ENCODE measurements at regions of chr9 and their contacts with region 1.

Region 1: DNA sequence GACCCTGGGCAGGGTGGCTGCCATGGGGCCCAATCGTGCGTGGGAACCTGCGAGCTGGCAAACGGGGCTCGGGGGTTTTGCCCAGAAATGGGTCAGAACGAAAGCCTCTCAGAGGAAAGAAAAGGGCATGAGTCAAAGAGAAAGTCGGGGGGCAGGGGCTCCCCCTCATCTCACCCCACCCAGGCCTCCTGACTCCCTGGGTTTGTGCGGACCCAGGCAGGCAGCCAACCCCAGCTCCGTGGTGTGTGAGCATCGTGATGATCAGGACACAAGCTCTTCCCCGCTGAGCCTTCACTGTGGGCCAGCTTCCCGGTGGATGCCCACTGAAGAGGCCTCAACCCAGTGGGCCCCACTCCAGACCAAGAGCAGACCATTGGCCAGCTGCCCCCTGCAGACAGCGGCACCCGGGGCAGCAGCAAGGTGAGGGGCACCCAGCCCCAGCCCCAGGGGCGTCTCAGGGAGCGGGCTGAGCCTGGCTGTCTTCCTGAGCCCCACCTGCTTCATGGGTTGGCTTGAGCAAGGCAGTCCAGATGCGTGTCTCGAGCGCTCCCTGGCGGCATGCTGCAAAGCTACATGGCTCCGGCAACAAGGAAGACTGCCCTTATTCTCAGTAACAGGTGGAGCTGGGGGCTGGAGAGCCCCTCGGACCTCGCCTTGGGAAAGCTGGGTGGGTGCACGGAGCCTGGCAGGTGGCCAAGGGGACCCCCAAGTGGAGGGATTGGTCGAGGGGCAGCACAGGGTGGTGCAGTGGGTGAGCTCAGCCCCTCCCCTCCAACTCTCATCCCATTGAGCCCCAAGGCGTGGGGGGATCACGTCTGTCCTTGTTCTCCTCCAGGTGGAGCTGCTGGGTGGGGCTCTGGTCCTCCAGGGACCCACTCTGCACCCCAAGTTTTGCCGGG is 3.2 kb upstream of the FUT7 start:
- DNase-seq: peak; percentile 90
- ATAC-seq: peak; percentile 94
- H3K4me3 Mint-ChIP-seq: no peak overlapping the region
- H3K27ac Mint-ChIP-seq: no peak overlapping the region
- H3K4me1 Mint-ChIP-seq: no peaks in the 10 kb centered on the region
- H3K27me3 Mint-ChIP-seq: no peaks in the 10 kb centered on the region
- CTCF ChIP-seq: peak; percentile 83

Region 2: GRCh38 chr9:136644598-136645351 is 390.3 kb before region 1 on chr9:
- CTCF ChIA-PET with region 1: no interaction called
- POLR2A ChIA-PET with region 1: no interaction called
- DNase-seq: peak; percentile 82
- ATAC-seq: peak; percentile 87
- H3K4me3 Mint-ChIP-seq: no peak overlapping the region
- H3K27ac Mint-ChIP-seq: no peak overlapping the region
- H3K4me1 Mint-ChIP-seq: no peaks in the 10 kb centered on the region
- H3K27me3 Mint-ChIP-seq: 0 out of 2 replicates have a peak, but pooled peaks cover 6% of the 10 kb centered on the region
- CTCF ChIP-seq: peak; percentile 81

Region 3: DNA sequence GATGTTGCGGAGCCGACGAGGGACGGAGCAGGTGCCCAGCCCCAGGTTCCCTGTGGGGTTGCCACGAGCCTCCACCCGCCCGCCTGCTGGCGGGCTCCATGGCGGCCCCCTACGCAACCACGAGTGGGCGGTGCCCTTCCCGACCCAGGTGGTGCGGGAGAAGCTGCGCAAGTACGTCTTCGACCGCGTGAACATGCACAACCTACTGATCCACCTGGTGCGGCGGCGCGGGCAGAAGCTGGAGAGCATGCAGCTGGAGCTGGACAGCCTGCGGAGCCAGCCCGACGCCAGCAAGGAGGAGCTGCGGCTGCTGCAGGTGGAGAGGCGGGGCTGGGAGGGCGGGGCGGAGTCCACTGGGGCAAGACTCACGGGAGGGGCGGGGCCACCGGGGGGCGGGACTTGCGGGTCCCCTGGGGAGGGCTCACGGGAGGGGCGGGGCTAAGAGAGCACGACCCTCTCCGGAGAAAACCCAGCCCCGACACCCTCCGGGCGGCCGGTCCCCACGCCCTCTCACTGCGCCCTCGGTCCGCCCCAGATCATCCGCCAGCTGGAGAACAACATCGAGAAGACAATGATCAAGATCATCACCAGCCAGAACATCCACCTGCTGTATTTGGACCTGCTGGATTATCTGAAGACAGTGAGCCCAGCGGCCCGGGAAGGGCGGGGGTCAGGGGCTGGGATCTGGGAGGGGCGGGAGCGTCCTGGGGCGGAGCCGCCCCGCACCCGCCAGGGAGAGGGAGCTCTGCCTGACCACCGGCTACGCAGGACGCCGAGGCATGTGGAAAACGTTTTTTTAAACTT is 235.1 kb before region 1 on chr9:
- CTCF ChIA-PET with region 1: interaction called, 14 read pairs
- POLR2A ChIA-PET with region 1: no interaction called
- DNase-seq: peak; percentile 92
- ATAC-seq: peak; percentile 54
- H3K4me3 Mint-ChIP-seq: peak overlapping the region; percentile 90
- H3K27ac Mint-ChIP-seq: peak overlapping the region; percentile 97
- H3K4me1 Mint-ChIP-seq: peaks cover 17% of the 10 kb centered on the region
- H3K27me3 Mint-ChIP-seq: peaks cover 58% of the 10 kb centered on the region
- CTCF ChIP-seq: no peak

Region 4: GRCh38 chr9:136965771-136966484 is 69.2 kb before region 1 on chr9:
- CTCF ChIA-PET with region 1: interaction called, 19 read pairs
- POLR2A ChIA-PET with region 1: no interaction called
- DNase-seq: no peak
- ATAC-seq: no peak
- H3K4me3 Mint-ChIP-seq: no peak overlapping the region
- H3K27ac Mint-ChIP-seq: peak overlapping the region; percentile 66; the same call in 1 of the 2 replicates
- H3K4me1 Mint-ChIP-seq: peaks cover 10% of the 10 kb centered on the region
- H3K27me3 Mint-ChIP-seq: no peaks in the 10 kb centered on the region
- CTCF ChIP-seq: no peak

Region 5: GRCh38 chr9:137000177-137000883 is 34.8 kb before region 1 on chr9:
- CTCF ChIA-PET with region 1: interaction called, 53 read pairs
- POLR2A ChIA-PET with region 1: no interaction called
- DNase-seq: no peak
- ATAC-seq: no peak
- H3K4me3 Mint-ChIP-seq: no peak overlapping the region
- H3K27ac Mint-ChIP-seq: no peak overlapping the region
- H3K4me1 Mint-ChIP-seq: 0 out of 2 replicates have a peak, but pooled peaks cover 4% of the 10 kb centered on the region
- H3K27me3 Mint-ChIP-seq: peaks cover 6% of the 10 kb centered on the region; the same call in 1 of the 2 replicates
- CTCF ChIP-seq: no peak

Region 6: GRCh38 chr9:137055385-137056364 is 20.6 kb after region 1 on chr9:
- CTCF ChIA-PET with region 1: interaction called, 60 read pairs
- POLR2A ChIA-PET with region 1: no interaction called
- DNase-seq: no peak
- ATAC-seq: no peak
- H3K4me3 Mint-ChIP-seq: no peak overlapping the region
- H3K27ac Mint-ChIP-seq: no peak overlapping the region
- H3K4me1 Mint-ChIP-seq: 0 out of 2 replicates have a peak, but pooled peaks cover 2% of the 10 kb centered on the region
- H3K27me3 Mint-ChIP-seq: peaks cover 24% of the 10 kb centered on the region
- CTCF ChIP-seq: no peak

Region 7: DNA sequence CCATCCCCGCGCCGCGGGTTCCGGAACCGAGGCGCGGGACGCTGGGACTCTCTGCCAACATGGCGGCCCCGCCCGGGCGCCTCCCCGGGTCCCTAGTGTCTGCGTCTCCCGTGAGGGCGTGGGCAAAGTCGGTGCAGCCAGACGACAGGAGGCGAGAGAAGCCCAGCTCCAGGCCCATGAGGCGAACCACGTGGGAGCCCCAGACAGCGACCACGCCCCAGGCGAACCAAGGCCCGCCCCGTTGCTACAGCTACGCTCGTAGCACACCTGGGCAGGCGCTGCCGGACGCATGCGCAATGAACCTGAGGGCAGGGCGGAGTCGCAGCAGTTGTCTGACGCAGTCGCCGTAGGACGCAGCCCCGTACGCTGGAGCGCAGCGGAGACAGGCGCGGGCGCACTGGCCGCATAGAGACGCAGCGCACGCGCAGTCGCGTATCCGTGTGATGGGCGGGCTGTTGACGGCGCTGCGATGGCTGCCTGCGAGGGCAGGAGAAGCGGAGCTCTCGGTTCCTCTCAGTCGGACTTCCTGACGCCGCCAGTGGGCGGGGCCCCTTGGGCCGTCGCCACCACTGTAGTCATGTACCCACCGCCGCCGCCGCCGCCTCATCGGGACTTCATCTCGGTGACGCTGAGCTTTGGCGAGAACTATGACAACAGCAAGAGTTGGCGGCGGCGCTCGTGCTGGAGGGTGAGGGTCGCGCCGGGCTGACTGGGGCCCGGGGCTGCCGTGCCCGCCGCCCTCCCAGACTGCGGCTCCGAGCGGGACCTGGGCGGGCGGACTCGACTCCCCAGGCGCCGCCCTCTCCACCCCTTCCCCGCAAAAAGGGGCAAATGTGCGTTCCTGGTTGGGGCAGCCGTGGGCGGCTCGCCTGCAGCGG is 51.7 kb after region 1 on chr9 and contains the start of gene MAN1B1:
- CTCF ChIA-PET with region 1: interaction called, 26 read pairs
- POLR2A ChIA-PET with region 1: no interaction called
- DNase-seq: peak; percentile 99
- ATAC-seq: peak; percentile 95
- H3K4me3 Mint-ChIP-seq: peak within 1 kb of the TSS; percentile 85
- H3K27ac Mint-ChIP-seq: peak within 1 kb of the TSS; percentile 91
- H3K4me1 Mint-ChIP-seq: peaks cover 16% of the 10 kb centered on the region
- H3K27me3 Mint-ChIP-seq: peaks cover 9% of the 10 kb centered on the region
- CTCF ChIP-seq: no peak
- total RNA-seq, gene MAN1B1: 44.9 to 57.1 TPM (median 47.1 TPM) in 3 replicates

Region 8: GRCh38 chr9:137123468-137123837 is 88.3 kb after region 1 on chr9:
- CTCF ChIA-PET with region 1: no interaction called
- POLR2A ChIA-PET with region 1: no interaction called
- DNase-seq: no peak
- ATAC-seq: no peak
- H3K4me3 Mint-ChIP-seq: no peak overlapping the region
- H3K27ac Mint-ChIP-seq: no peak overlapping the region
- H3K4me1 Mint-ChIP-seq: peaks cover 9% of the 10 kb centered on the region
- H3K27me3 Mint-ChIP-seq: no peaks in the 10 kb centered on the region; the same call in 1 of the 2 replicates
- CTCF ChIP-seq: no peak

Region 9: GRCh38 chr9:137286975-137287383 is 251.9 kb after region 1 on chr9:
- CTCF ChIA-PET with region 1: no interaction called
- POLR2A ChIA-PET with region 1: no interaction called
- DNase-seq: peak; percentile 75
- ATAC-seq: peak; percentile 99
- H3K4me3 Mint-ChIP-seq: no peak overlapping the region
- H3K27ac Mint-ChIP-seq: no peak overlapping the region
- H3K4me1 Mint-ChIP-seq: no peaks in the 10 kb centered on the region
- H3K27me3 Mint-ChIP-seq: peaks cover 26% of the 10 kb centered on the region
- CTCF ChIP-seq: no peak